Heart left ventricle (tissue), 16 donors: ENCODE measurements at regions of chr18 and their contacts with region 1.

Region 1: DNA sequence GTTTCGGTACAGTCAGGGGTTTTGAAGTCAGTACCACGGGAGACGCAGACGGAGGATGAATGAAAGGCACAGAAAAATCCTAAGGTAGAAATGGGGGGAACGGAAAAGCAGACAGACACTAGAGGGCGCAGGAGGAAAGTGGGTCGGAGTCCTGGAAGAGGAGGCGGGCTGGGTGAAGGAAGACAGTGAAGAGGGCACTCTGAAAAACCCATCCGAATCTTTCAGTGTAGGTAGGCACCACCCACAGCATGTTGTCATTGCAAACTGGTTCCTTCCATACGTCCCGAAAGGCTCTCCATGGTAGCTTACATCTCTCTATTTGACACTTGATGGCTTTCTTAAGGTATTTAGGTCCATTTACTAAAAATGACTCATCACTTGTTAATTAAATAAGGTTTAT is 18.5 kb upstream of the ZNF236 start:
- DNase-seq: peak in 4 of 5 donors; percentile 47 to 60 (median 54)
- ATAC-seq: peak in 3 of 4 donors; percentile 54 to 74 (median 66)
- H3K4me3 ChIP-seq: no peak overlapping the region
- H3K27ac ChIP-seq: no peak overlapping the region
- H3K4me1 ChIP-seq: peaks cover 0 to 16% (median 4%) of the 10 kb centered on the region in 12 donors
- H3K27me3 ChIP-seq: peaks cover 0 to 13% (median 0%) of the 10 kb centered on the region in 9 donors
- CTCF ChIP-seq: peak; percentile 59 to 82 (median 72)
- POLR2A ChIP-seq: no peak

Region 2: DNA sequence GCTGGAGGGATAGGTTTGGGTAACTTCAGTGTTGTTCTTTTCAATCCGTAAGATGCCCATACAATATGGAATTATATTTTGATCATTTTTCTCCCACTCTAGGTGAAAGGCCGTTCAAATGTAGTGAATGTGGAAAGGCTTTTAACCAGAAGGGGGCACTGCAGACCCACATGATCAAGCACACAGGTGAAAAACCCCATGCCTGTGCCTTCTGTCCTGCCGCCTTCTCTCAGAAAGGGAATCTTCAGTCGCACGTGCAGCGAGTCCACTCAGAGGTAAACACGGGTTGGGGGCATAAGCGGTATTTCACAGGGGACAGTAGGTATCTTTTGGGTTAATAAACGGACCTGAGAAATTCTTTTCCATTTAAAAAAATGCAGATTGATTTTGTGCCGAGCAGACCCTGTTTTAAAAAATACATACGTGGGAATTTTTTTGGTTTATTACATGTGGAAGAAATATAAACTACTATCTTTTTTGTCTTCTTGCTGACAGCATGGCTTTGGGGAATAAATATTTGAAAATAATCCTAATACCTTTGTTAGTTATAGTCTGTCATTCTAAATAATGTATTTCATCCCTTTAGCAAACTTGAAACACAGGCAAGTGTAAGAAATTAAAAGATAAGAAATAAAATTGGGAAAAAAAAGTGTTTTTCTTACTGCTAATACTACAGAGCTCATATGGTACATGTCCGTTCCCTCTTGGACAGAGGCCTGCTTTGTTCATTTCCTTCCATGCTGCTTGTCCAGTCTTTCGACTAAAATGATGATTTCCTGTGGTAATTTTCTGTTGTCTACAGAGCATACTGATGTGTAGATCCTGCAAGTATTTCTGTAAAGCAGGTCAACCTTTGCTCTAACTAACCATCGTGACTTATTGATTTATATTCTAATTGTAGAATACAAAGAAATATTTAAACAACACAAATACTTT is 71.8 kb after region 1 on chr18:
- intact Hi-C with region 1: loop called in 5 of 10 experiments (anchors 5 to 10 kb)
- DNase-seq: no peak
- ATAC-seq: peak in 2 of 4 donors; percentile 46 to 63
- H3K4me3 ChIP-seq: no peak overlapping the region
- H3K27ac ChIP-seq: no peak overlapping the region
- H3K4me1 ChIP-seq: peaks cover 0 to 3% (median 0%) of the 10 kb centered on the region in 12 donors
- H3K27me3 ChIP-seq: no peaks in the 10 kb centered on the region
- CTCF ChIP-seq: peak; percentile 30 to 69 (median 54)
- POLR2A ChIP-seq: no peak

Region 3: DNA sequence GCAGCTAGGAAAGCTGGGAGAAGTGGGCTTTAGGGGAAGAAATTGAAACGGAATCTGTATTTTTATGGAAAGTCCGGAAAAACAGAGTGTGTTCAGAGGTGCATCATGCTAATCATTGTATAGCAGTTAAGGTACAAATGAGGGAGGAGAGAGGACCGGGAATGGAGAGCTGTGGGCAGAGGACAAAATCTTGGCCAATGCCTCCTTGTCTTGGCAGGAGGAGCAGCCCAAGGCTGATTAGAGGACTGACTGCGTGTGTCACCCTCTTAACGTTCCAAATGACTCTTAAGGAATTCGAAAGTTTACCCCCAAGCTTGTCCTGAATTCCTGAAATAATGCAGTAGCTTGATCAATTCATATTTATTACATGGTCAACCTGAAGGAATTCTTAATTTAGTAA is 99.6 kb after region 1 on chr18:
- intact Hi-C with region 1: loop called in 1 of 10 experiments (anchors 10 kb)
- DNase-seq: no peak
- ATAC-seq: peak in 2 of 4 donors; percentile 77 to 78
- H3K4me3 ChIP-seq: no peak overlapping the region
- H3K27ac ChIP-seq: no peak overlapping the region
- H3K4me1 ChIP-seq: peaks cover 0 to 7% (median 0%) of the 10 kb centered on the region in 12 donors
- H3K27me3 ChIP-seq: no peaks in the 10 kb centered on the region
- CTCF ChIP-seq: no peak
- POLR2A ChIP-seq: no peak

Region 4: DNA sequence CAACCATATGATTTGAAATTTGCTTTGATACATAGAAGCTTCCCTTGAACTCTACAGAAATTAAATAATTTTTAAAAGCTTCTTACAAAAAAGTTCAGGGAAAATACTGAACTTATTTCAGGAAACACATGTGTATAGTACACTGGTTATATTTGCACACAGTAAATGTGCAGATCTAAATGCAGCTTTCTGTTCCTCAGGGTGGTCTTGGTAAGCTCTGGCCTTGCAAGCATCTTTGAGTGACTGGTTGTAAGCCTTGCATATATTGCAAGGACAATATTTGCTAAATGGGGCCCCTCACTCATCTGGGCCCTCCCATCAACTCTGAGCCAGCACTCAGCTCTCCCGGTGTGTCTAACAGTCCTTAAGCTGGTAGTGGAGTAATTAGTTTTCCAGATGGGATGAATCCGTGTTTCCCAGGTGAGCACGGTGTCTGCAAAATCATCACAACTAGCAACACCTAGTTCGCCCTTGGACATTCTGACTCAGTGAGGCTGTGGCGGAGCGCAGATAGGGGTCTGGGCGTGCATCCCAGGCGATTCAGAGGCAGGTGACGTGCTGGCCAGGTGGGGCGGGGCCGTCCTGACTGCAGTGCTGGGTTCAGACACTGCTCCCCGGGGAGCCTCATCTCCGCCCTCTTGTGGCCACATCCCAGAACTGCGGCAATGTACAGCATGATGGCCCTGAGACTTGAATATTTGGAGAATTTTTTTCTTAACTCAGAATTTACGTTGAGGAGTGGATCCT is 179.2 kb after region 1 on chr18:
- intact Hi-C with region 1: loop called in 9 of 10 experiments (anchors 1 to 5 kb)
- DNase-seq: peak; percentile 58 to 90 (median 78)
- ATAC-seq: peak; percentile 64 to 84 (median 78)
- H3K4me3 ChIP-seq: no peak overlapping the region
- H3K27ac ChIP-seq: no peak overlapping the region
- H3K4me1 ChIP-seq: peaks cover 0 to 16% (median 2%) of the 10 kb centered on the region in 12 donors
- H3K27me3 ChIP-seq: no peaks in the 10 kb centered on the region
- CTCF ChIP-seq: peak; percentile 74 to 95 (median 90)
- POLR2A ChIP-seq: no peak

Region 5: DNA sequence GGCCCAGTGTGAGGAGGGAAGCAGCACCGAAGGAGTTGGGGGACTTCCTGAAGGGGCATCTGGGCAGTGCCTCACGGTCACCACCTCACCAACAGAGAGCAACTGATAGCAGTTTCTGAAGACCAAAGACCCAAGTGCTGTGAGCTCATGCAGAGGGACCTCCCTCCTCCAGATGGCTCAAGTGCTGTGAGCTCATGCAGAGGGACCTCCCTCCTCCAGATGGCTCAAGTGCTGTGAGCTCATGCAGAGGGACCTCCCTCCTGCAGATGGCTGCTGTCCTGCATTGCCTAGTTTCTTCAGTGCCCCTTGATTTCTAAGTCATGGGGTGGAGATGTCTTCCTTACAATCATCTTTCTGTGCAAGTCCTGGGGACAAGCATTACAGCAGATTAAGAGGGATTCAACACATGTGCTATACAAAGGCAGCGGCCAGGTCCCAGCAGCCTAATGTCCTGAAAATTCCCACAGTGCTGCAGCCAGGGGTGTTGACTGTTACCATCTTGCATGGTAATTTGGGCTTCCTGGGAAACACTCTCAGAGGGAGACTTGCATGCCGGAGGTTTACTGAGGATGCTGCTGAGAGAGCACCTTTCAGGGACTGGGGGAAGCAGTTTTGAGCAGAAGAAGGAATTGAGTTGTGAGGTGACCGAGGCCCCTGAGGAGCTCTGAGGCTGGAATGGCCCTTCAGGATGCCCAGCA is 855.1 kb after region 1 on chr18:
- intact Hi-C with region 1: loop called in 5 of 10 experiments (anchors 5 to 10 kb)
- DNase-seq: no peak
- ATAC-seq: peak; percentile 13 to 89 (median 75)
- H3K4me3 ChIP-seq: no peak overlapping the region
- H3K27ac ChIP-seq: no peak overlapping the region
- H3K4me1 ChIP-seq: no peaks in the 10 kb centered on the region
- H3K27me3 ChIP-seq: peaks cover 0 to 26% (median 0%) of the 10 kb centered on the region in 9 donors
- CTCF ChIP-seq: no peak
- POLR2A ChIP-seq: no peak